ENCODE measurements at regions of chr1 and their contacts with region 1.

Region 1: GRCh38 chr1:28648474-28649198 is at the start of gene RNU11:
- DNase-seq: peak; percentile 98
- H3K4me3 ChIP-seq: peak within 1 kb of the TSS; percentile 69
- H3K27ac ChIP-seq: peak within 1 kb of the TSS; percentile 99
- H3K4me1 ChIP-seq: peaks cover 35% of the 10 kb centered on the region
- CTCF ChIP-seq: no peak
- total RNA-seq, gene RNU11: not detected in 2 replicates

Region 2: GRCh38 chr1:28668191-28668955 is 19.7 kb after region 1 on chr1 and contains the start of gene GMEB1:
- CTCF ChIA-PET with region 1: interaction called, 3 read pairs
- POLR2A ChIA-PET with region 1: interaction called, 30 read pairs
- intact Hi-C with region 1: loop called (anchors 1 kb)
- DNase-seq: peak; percentile 93
- H3K4me3 ChIP-seq: peak within 1 kb of the TSS; percentile 87
- H3K27ac ChIP-seq: peak within 1 kb of the TSS; percentile 93
- H3K4me1 ChIP-seq: peaks cover 13% of the 10 kb centered on the region
- CTCF ChIP-seq: no peak
- total RNA-seq, gene GMEB1: 12.5 and 13.0 TPM in 2 replicates